Ovary (tissue), 10 donors: ENCODE measurements at regions of chr11 and their contacts with region 1.

Region 1: GRCh38 chr11:111059726-111060125 is 185.8 kb upstream of the POU2AF2 start:
- DNase-seq: no peak
- H3K4me3 ChIP-seq: no peak overlapping the region
- H3K27ac ChIP-seq: no peak overlapping the region
- H3K4me1 ChIP-seq: no peaks in the 10 kb centered on the region
- H3K27me3 ChIP-seq: no peaks in the 10 kb centered on the region
- CTCF ChIP-seq: no peak
- EP300 ChIP-seq: no peak
- POLR2A ChIP-seq: no peak

Region 2: GRCh38 chr11:110793556-110793955 is 266.2 kb before region 1 on chr11:
- intact Hi-C with region 1: no loop called
- DNase-seq: no peak
- H3K4me3 ChIP-seq: no peak overlapping the region
- H3K27ac ChIP-seq: no peak overlapping the region
- H3K4me1 ChIP-seq: no peaks in the 10 kb centered on the region
- H3K27me3 ChIP-seq: no peaks in the 10 kb centered on the region
- CTCF ChIP-seq: no peak
- EP300 ChIP-seq: no peak
- POLR2A ChIP-seq: no peak

Region 3: DNA sequence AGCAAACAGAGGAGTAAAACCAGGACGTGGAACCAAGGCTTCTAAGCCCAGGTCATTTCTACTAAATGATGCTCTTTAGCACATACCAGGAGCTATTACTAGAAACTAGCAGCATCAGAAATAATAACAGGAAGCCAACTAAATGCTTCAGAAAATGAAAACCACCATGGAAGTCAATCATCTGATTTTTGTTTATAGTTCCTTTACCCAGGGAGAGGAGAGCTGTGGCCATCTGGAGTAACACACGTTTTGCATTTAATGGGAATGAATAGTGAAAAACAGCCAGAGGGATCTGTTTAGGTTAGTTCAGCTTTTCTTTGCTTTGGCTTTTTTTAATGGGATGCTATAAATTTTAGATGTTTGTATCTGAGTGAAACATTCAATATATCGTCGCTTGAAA is 96.8 kb before region 1 on chr11:
- intact Hi-C with region 1: no loop called
- DNase-seq: no peak
- H3K4me3 ChIP-seq: no peak overlapping the region
- H3K27ac ChIP-seq: no peak overlapping the region
- H3K4me1 ChIP-seq: no peaks in the 10 kb centered on the region
- H3K27me3 ChIP-seq: no peaks in the 10 kb centered on the region
- CTCF ChIP-seq: no peak
- EP300 ChIP-seq: no peak
- POLR2A ChIP-seq: no peak

Region 4: DNA sequence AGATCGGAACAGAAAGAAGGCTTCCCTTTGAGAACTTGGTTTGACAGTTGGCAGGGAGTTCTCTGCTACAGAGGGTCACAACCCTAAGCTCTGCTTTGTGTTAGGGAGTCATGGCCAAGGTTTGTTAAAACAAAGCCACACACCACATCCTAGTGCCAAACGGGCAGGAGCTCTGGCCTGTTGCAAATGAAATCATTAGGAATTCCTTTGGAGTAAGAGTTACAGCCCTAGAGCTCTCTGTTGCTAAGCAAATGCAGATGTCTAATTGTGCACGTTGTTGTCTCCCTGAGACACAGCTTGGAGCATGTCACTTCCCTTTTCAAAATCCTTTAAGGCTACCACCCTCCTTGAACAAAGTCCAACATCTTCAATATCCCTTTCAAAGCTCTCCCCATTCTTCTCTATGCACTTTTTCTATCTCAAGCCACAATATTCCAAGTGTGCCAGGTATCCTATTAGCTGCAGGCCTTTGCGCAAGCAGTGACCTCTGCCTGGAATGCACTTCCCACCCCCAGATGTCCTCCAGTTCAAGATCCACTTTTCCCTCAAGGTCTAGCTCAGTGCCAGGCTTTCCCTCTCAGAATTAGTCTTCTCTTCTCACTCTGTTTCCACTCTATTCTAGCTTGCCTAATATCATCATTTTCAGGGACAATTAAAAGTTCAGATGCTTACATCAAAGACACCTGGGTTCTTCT is 67.9 kb before region 1 on chr11:
- intact Hi-C with region 1: no loop called
- DNase-seq: peak in 1 of 5 donors; percentile 21
- H3K4me3 ChIP-seq: no peak overlapping the region
- H3K27ac ChIP-seq: no peak overlapping the region
- H3K4me1 ChIP-seq: no peaks in the 10 kb centered on the region
- H3K27me3 ChIP-seq: no peaks in the 10 kb centered on the region
- CTCF ChIP-seq: no peak
- EP300 ChIP-seq: no peak
- POLR2A ChIP-seq: no peak

Region 5: DNA sequence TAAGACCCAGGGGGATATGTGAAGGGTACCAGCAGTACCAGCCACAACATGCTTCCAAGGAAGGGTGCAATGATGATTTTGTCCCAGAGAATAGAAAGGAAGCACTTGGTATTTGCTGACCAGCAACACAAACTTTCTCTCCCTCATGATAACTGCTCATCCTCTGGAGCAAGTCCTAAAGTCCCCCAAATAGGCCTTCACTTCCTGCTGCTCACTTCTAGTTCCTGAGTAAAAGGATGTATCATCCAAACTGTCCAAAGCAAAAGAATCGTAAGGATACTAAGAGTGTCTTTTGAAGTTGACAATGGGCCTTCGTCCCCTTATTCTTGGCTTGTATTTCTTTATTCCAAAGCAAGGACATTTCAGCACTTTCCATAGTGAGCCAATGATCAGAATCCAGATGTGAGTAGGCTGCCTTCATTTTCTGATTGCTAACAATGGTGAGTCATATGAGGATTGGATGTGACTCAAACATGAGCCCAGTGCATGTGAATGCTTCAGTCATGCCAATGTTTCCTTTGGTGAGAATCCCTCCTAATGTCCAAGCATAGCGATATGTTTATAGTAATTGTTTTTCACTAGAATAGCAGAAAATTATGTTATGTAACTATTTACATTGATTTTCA is 57.6 kb before region 1 on chr11:
- intact Hi-C with region 1: no loop called
- DNase-seq: no peak
- H3K4me3 ChIP-seq: no peak overlapping the region
- H3K27ac ChIP-seq: no peak overlapping the region
- H3K4me1 ChIP-seq: no peaks in the 10 kb centered on the region
- H3K27me3 ChIP-seq: no peaks in the 10 kb centered on the region
- CTCF ChIP-seq: no peak
- EP300 ChIP-seq: no peak
- POLR2A ChIP-seq: no peak

Region 6: GRCh38 chr11:111035746-111036145 is 24.0 kb before region 1 on chr11:
- intact Hi-C with region 1: loop called in 1 of 4 experiments (anchors 1 kb)
- DNase-seq: no peak
- H3K4me3 ChIP-seq: no peak overlapping the region
- H3K27ac ChIP-seq: no peak overlapping the region
- H3K4me1 ChIP-seq: no peaks in the 10 kb centered on the region
- H3K27me3 ChIP-seq: no peaks in the 10 kb centered on the region
- CTCF ChIP-seq: no peak
- EP300 ChIP-seq: no peak
- POLR2A ChIP-seq: no peak